HepG2 (cell line): ENCODE measurements at regions of chr6 and their contacts with region 1.

Region 1: GRCh38 chr6:36594029-36594815 is at the start of gene SRSF3:
- DNase-seq: peak; percentile 98
- ATAC-seq: peak; percentile 92
- H3K4me3 ChIP-seq: peak within 1 kb of the TSS; percentile 87 to 97 (median 92)
- H3K27ac ChIP-seq: peak within 1 kb of the TSS; percentile 93
- H3K4me1 ChIP-seq: peaks cover 50% of the 10 kb centered on the region
- H3K27me3 ChIP-seq: no peaks in the 10 kb centered on the region; a peak in 1 of 5 replicates
- CTCF ChIP-seq: peak; percentile 82
- EP300 ChIP-seq: peak in 1 of 2 experiments; percentile 56; a peak in 3 of 4 replicates
- POLR2A ChIP-seq: peak; percentile 100
- RAD21 ChIP-seq: peak; percentile 64
- total RNA-seq, gene SRSF3: 684 and 1,115 TPM in 2 replicates

Region 2: GRCh38 chr6:36131511-36132245 is 462.5 kb before region 1 on chr6:
- CTCF ChIA-PET with region 1: no interaction called
- POLR2A ChIA-PET with region 1: no interaction called
- in situ Hi-C with region 1: no loop called
- intact Hi-C with region 1: no loop called
- DNase-seq: peak; percentile 84
- ATAC-seq: peak; percentile 22
- H3K4me3 ChIP-seq: peak overlapping the region; percentile 75 to 92 (median 75)
- H3K27ac ChIP-seq: peak overlapping the region; percentile 90
- H3K4me1 ChIP-seq: peaks cover 66% of the 10 kb centered on the region
- H3K27me3 ChIP-seq: no peaks in the 10 kb centered on the region
- CTCF ChIP-seq: no peak
- EP300 ChIP-seq: peak in 1 of 2 experiments; percentile 57; a peak in 1 of 4 replicates
- POLR2A ChIP-seq: no peak; a peak in 1 of 4 replicates
- RAD21 ChIP-seq: no peak

Region 3: GRCh38 chr6:36423101-36423824 is 171.0 kb before region 1 on chr6:
- CTCF ChIA-PET with region 1: no interaction called
- POLR2A ChIA-PET with region 1: interaction called, 10 read pairs
- in situ Hi-C with region 1: no loop called
- intact Hi-C with region 1: loop called (anchors 5 kb)
- DNase-seq: peak; percentile 98
- ATAC-seq: peak; percentile 94
- H3K4me3 ChIP-seq: peak overlapping the region; percentile 64 to 72 (median 71)
- H3K27ac ChIP-seq: peak overlapping the region; percentile 62
- H3K4me1 ChIP-seq: peaks cover 41% of the 10 kb centered on the region
- H3K27me3 ChIP-seq: peaks cover 0 to 4% of the 10 kb centered on the region in 2 experiments; a peak in 1 of 5 replicates
- CTCF ChIP-seq: peak; percentile 98
- EP300 ChIP-seq: no peak
- POLR2A ChIP-seq: peak; percentile 43 to 75; a peak in 3 of 4 replicates
- RAD21 ChIP-seq: peak; percentile 92

Region 4: DNA sequence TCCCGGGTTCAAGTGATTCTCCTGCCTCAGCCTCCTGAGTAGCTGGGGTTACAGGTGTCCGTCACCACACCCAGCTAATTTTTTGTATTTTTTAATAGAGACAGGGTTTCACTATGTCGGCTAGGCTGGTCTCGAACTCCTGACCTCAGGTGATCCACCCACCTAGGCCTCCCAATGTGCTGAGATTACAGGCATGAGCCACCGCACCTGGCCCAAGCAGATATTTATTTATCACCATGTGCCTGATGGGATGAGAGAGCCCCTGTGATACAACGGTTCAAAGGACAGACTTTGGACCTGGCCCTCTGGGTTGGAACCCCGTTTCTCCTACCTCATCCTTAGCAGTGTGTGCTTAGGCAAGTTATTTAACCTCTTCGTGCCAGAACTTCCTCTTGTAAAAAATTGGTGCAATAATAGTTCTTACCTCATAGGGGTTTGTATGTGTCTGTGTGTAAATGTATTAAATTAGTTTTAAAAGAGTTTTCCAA is 27.8 kb before region 1 on chr6:
- CTCF ChIA-PET with region 1: no interaction called
- POLR2A ChIA-PET with region 1: interaction called, 13 read pairs
- in situ Hi-C with region 1: no loop called
- intact Hi-C with region 1: no loop called
- DNase-seq: peak; percentile 99
- ATAC-seq: peak; percentile 89
- H3K4me3 ChIP-seq: peak overlapping the region in 2 of 3 experiments; percentile 55 to 70; a peak in 3 of 6 replicates
- H3K27ac ChIP-seq: peak overlapping the region; percentile 91
- H3K4me1 ChIP-seq: peaks cover 75% of the 10 kb centered on the region
- H3K27me3 ChIP-seq: no peaks in the 10 kb centered on the region; a peak in 1 of 5 replicates
- CTCF ChIP-seq: 0 out of 2 replicates have a peak, but pooled peaks have one; percentile 17
- EP300 ChIP-seq: peak; percentile 46 to 81; a peak in 3 of 4 replicates
- POLR2A ChIP-seq: no peak
- RAD21 ChIP-seq: no peak

Region 5: DNA sequence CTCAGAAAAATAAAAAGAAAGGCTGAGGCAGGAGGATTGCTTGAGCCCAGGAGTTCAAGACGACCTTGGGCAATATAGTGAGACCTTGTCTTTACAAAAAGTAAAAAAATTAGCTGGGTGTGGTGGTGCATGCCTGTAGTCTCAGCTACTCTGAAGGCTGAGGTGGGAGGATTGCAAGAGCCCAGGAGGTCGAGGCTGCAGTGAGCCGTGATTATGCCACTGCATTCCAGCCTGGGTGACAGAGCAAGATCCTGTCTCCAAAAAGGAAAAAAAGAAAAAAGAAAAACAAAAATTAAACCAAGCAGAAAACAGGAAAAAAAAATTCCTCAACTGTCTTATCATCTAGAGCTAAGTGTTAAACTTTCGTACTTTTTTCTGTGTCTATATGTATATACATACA is 12.5 kb before region 1 on chr6:
- CTCF ChIA-PET with region 1: no interaction called
- POLR2A ChIA-PET with region 1: interaction called, 29 read pairs
- in situ Hi-C with region 1: no loop called
- intact Hi-C with region 1: loop called (anchors 2 kb)
- DNase-seq: no peak
- ATAC-seq: no peak
- H3K4me3 ChIP-seq: no peak overlapping the region
- H3K27ac ChIP-seq: no peak overlapping the region
- H3K4me1 ChIP-seq: peaks cover 40% of the 10 kb centered on the region
- H3K27me3 ChIP-seq: no peaks in the 10 kb centered on the region
- CTCF ChIP-seq: no peak
- EP300 ChIP-seq: no peak
- POLR2A ChIP-seq: no peak
- RAD21 ChIP-seq: no peak

Region 6: DNA sequence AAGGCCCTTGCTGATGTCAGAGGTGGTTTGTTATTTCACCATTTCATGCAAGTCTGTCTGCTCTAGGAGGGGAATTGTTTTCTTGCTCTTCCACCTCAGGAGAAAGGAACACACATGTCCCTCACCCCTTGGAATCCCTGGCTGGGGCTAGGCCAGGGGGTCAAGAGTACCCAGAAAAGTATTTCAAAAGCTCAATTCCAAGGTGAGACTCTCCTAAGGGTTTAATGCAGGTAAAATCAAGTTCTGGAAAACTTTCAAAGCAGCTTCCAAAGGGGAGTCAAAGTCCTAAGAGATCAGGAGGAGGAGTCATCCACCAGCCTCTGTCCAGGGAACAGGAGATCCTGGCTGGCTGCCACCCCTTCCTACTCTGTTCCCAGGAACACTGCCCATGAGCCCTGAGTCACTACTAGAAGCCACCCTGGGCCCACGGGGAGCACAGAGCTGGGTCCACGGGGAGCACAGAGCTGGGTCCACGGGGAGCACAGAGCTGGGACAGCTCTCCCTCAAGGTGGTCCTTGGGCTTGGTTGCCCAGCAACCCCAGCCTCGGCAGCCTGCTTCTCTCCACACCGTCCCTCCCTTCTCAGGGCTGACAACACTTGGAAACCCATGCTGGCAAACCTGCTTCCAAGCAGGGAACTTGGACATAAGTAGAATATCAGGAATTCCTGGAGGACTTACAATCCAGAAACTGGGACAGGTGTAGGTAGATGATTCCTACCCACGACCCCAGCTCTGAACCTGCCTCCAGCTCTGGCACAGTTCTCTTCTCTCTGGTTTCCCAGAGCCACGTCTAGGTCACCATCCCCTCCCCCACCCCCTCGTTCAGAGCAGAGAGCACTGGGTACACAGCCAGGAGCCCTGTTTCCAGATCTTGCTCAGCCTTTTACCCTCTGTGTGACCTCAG is 48.9 kb after region 1 on chr6:
- CTCF ChIA-PET with region 1: no interaction called
- POLR2A ChIA-PET with region 1: no interaction called
- in situ Hi-C with region 1: no loop called
- intact Hi-C with region 1: loop called (anchors 1 kb)
- DNase-seq: peak; percentile 88
- ATAC-seq: peak; percentile 97
- H3K4me3 ChIP-seq: peak overlapping the region; percentile 14 to 70 (median 39)
- H3K27ac ChIP-seq: peak overlapping the region; percentile 61
- H3K4me1 ChIP-seq: peaks cover 57% of the 10 kb centered on the region
- H3K27me3 ChIP-seq: 0 out of 5 replicates have a peak, but pooled peaks cover 0 to 6% of the 10 kb centered on the region in 2 experiments
- CTCF ChIP-seq: no peak; the same call in 1 of the 2 replicates
- EP300 ChIP-seq: no peak
- POLR2A ChIP-seq: 0 out of 4 replicates have a peak, but pooled peaks of 1 of the 2 experiments have one; percentile 25
- RAD21 ChIP-seq: no peak

Region 7: GRCh38 chr6:37038292-37039198 is 444.3 kb after region 1 on chr6:
- CTCF ChIA-PET with region 1: no interaction called
- POLR2A ChIA-PET with region 1: no interaction called
- in situ Hi-C with region 1: no loop called
- intact Hi-C with region 1: no loop called
- DNase-seq: no peak
- ATAC-seq: peak; percentile 58
- H3K4me3 ChIP-seq: peak overlapping the region in 1 of 3 experiments; percentile 33; a peak in 1 of 6 replicates
- H3K27ac ChIP-seq: no peak overlapping the region
- H3K4me1 ChIP-seq: peaks cover 28% of the 10 kb centered on the region
- H3K27me3 ChIP-seq: peaks cover 1 to 5% of the 10 kb centered on the region in 2 experiments
- CTCF ChIP-seq: no peak
- EP300 ChIP-seq: no peak
- POLR2A ChIP-seq: no peak
- RAD21 ChIP-seq: no peak